Activated CD8-positive, alpha-beta T cell treated with anti-CD3 and anti-CD28 coated beads, Interleukin-2, amount 10 ng/mL, durations not matched to agents 7 days and 5 days (primary cell): ENCODE measurements at regions of chr12 and their contacts with region 1.

Region 1: DNA sequence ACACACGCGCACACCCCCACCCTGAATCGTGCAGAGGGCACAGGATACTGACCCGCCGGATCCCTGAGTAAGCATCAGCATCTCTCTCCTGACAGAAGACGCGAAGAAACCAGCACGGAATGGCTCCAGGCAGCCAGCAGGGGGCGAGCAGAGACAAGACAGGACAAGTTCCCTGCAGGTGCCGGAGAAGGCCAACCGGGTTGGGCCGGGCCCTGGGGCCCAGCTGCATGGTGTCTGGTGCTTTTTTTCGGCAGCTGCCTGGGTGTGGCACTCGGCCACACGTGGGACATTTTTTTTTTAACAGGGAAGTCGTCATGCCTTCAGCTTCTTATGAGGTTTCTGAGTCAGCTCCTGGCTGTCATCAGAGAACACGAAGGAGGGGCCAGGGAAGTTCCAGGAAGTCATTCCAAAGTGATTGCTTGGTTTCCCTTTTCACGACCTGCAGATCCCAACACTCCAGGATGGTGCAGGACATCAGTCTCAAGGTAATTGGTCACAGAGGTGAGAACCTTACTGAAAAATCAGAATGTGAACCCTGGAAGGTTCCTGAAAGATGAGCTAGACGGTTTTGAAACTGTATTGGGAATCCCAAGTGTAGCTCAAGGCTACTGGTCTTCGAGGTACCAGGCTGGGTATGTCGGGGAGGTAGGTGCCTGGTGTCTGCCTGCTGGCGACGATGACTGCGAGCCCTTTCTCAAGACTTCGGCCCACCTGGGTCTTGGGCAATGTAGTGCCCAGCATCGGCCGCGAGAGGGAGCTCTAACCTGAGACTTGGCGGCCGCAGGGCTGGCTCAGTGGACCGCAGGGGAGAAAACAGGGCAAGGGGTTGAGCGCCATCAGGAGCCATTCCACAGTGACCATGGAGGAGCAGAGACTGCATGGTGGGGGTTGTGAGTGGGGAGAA is 190.8 kb upstream of the PRMT8 start:
- DNase-seq: peak; percentile 88
- ATAC-seq: peak; percentile 90
- H3K4me3 Mint-ChIP-seq: peak overlapping the region; percentile 25
- H3K27ac Mint-ChIP-seq: peak overlapping the region; percentile 43
- H3K4me1 Mint-ChIP-seq: peaks cover 11% of the 10 kb centered on the region
- H3K27me3 Mint-ChIP-seq: no peaks in the 10 kb centered on the region

Region 2: GRCh38 chr12:3101309-3102024 is 198.7 kb before region 1 on chr12:
- CTCF ChIA-PET with region 1: no interaction called
- POLR2A ChIA-PET with region 1: no interaction called
- DNase-seq: no peak
- ATAC-seq: no peak
- H3K4me3 Mint-ChIP-seq: no peak overlapping the region
- H3K27ac Mint-ChIP-seq: no peak overlapping the region
- H3K4me1 Mint-ChIP-seq: no peaks in the 10 kb centered on the region
- H3K27me3 Mint-ChIP-seq: peaks cover 5% of the 10 kb centered on the region

Region 3: GRCh38 chr12:3313675-3314663 is 13.8 kb after region 1 on chr12:
- CTCF ChIA-PET with region 1: interaction called, 59 read pairs
- POLR2A ChIA-PET with region 1: no interaction called
- DNase-seq: peak; percentile 28
- ATAC-seq: peak; percentile 85
- H3K4me3 Mint-ChIP-seq: no peak overlapping the region
- H3K27ac Mint-ChIP-seq: no peak overlapping the region
- H3K4me1 Mint-ChIP-seq: no peaks in the 10 kb centered on the region
- H3K27me3 Mint-ChIP-seq: peaks cover 2% of the 10 kb centered on the region

Region 4: DNA sequence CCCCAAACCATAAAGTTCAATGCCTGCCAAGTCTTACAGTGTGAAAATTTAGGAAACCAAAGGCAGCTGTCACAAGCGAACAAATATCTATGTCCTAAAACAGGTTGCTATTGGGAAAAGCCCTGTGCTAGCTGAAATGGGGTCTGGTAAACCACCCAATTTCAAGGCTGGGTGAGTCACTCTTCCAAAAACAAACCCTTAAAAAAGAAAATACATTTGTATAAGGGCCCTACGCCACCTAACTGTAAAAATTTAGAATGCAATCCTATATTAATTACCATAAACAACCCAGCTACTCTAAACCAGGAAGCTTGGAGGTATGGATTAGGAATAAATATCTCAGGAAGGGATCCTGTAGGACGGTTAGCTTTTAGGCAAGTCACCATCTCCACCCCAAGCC is 222.9 kb after region 1 on chr12:
- CTCF ChIA-PET with region 1: interaction called, 10 read pairs
- POLR2A ChIA-PET with region 1: no interaction called
- DNase-seq: no peak
- ATAC-seq: no peak
- H3K4me3 Mint-ChIP-seq: no peak overlapping the region
- H3K27ac Mint-ChIP-seq: no peak overlapping the region
- H3K4me1 Mint-ChIP-seq: no peaks in the 10 kb centered on the region
- H3K27me3 Mint-ChIP-seq: peaks cover 10% of the 10 kb centered on the region

Region 5: DNA sequence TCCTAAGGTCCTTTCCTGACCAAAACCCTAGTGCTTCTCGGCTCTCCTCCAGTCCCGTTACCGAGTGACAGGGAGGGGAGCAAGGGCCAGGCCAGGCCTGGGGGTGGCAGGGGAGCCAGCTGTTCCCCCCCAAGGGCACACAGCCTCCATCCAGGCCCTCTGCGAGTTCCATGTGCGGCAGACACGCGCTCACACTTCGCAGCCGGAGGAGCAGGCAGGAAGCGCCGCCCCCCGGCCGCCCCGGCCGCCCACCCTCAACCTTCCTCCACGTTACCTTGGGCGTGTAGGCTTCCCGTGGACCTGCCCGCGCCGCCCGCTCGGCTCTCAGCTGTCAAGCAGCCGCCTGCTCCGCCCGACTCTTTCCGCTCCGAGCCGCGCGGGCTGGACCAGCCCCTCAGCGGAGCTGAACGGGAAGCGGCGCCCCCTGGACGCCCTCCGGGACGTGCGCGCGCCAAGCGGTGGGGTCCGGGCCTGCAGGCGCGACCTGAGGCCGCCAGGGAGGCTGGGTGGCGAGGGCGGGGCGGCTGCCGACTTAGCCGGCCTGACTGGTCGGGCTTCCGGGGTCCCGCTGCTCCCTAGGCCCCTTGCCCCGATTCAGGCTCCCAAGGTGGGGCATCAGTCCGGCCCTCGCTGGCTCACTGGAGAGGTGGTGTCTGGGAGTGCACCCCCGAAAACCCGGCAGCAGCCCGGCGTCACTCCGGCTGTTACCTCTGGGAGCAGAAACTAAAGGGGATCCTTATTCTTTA is 452.7 kb after region 1 on chr12 and contains the start of gene CRACR2A:
- CTCF ChIA-PET with region 1: interaction called, 13 read pairs
- POLR2A ChIA-PET with region 1: interaction called, 3 read pairs
- DNase-seq: peak; percentile 92
- ATAC-seq: peak; percentile 89
- H3K4me3 Mint-ChIP-seq: peak within 1 kb of the TSS; percentile 85
- H3K27ac Mint-ChIP-seq: peak within 1 kb of the TSS; percentile 96
- H3K4me1 Mint-ChIP-seq: peaks cover 54% of the 10 kb centered on the region
- H3K27me3 Mint-ChIP-seq: no peaks in the 10 kb centered on the region
- total RNA-seq, gene CRACR2A: 38.5 to 40.1 TPM

Region 6: GRCh38 chr12:3797531-3798049 is 497.4 kb after region 1 on chr12:
- CTCF ChIA-PET with region 1: interaction called, 45 read pairs
- POLR2A ChIA-PET with region 1: no interaction called
- DNase-seq: no peak
- ATAC-seq: no peak
- H3K4me3 Mint-ChIP-seq: no peak overlapping the region
- H3K27ac Mint-ChIP-seq: no peak overlapping the region
- H3K4me1 Mint-ChIP-seq: no peaks in the 10 kb centered on the region
- H3K27me3 Mint-ChIP-seq: no peaks in the 10 kb centered on the region

Region 7: GRCh38 chr12:3872800-3873636 is 572.8 kb after region 1 on chr12 and contains the start of gene PARP11:
- CTCF ChIA-PET with region 1: interaction called, 10 read pairs
- POLR2A ChIA-PET with region 1: no interaction called
- DNase-seq: peak; percentile 99
- ATAC-seq: peak; percentile 94
- H3K4me3 Mint-ChIP-seq: peak within 1 kb of the TSS; percentile 94
- H3K27ac Mint-ChIP-seq: peak within 1 kb of the TSS; percentile 97
- H3K4me1 Mint-ChIP-seq: peaks cover 41% of the 10 kb centered on the region
- H3K27me3 Mint-ChIP-seq: no peaks in the 10 kb centered on the region
- total RNA-seq, gene PARP11: 36.4 to 36.6 TPM